ENCODE measurements at regions of chr3 and their contacts with region 1.

Region 1: GRCh38 chr3:16048435-16049318 is 125.8 kb upstream of the GALNT15 start:
- DNase-seq: peak in 6 of 10 donors; percentile 32 to 91 (median 58)

Region 2: DNA sequence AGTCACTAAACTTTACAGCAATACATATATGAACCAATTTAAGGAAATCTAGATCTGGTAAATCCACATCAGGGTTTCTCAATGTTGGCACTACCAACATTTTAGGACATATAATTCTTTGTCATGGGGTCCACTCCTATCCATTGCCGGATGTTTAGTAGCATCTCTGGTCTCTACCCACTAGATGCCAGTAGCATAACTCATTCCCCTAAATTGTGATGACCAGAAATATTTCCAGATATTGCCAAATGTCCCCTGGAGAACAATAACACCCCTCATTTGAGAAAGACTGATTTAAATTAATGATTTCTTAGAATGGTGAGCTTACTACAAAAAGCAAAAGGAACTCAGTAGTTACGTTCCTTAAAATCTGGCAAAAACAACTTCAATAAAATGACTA is 227.8 kb before region 1 on chr3:
- intact Hi-C with region 1: loop called (anchors 10 kb)
- DNase-seq: no peak

Region 3: DNA sequence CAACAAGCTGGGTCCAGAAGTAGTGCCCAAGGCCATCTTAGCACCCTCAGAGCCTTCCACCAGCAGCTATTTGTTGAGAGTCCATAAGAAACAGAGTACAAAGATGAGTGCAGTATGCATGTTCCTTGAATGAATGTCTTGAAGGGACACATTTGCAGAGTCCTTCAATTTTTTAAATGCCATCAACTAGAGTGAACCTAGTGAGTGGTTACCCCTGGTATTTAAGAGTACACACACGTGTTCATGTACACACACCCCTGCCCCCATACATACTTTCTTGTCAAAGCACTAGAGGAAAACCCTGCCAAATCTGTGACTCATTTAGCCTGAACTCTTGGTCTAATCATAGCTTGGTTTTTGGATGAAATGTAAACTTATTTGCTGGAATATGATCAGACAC is 41.3 kb after region 1 on chr3:
- intact Hi-C with region 1: no loop called
- DNase-seq: no peak

Region 4: DNA sequence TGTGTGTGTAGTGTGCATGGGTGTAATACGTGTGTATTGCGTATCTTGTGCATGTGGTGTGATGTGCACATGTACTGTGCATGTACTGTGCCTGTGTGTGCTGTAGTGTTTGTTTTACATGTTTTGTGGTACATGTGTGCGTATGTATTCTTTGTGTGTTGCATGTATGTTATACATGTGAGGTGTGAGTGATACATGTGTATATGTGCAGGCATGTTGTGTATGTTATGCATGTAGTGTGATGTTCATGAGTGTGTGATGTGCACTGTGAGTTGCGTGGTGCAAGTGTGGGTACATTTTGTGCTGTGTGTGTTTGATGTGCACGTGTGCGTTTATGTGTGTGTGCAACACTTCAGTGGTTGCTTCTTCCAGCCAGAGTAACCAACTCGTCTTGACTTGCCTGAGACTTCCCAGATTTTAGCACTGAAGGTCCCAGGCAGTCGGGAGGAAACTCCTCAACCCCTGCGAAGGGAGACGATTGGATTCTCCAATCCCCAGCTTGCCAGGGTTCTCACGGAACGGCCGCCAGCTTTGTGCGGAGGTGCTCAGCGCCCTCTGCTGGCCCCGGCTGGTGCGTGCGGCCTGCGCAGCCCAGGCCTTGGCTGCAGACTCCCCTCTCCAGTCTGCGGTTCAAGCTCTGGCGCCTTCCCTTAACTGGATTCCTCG is 129.4 kb after region 1 on chr3:
- intact Hi-C with region 1: loop called (anchors 1 kb)
- DNase-seq: peak; percentile 83 to 98 (median 88)

Region 5: DNA sequence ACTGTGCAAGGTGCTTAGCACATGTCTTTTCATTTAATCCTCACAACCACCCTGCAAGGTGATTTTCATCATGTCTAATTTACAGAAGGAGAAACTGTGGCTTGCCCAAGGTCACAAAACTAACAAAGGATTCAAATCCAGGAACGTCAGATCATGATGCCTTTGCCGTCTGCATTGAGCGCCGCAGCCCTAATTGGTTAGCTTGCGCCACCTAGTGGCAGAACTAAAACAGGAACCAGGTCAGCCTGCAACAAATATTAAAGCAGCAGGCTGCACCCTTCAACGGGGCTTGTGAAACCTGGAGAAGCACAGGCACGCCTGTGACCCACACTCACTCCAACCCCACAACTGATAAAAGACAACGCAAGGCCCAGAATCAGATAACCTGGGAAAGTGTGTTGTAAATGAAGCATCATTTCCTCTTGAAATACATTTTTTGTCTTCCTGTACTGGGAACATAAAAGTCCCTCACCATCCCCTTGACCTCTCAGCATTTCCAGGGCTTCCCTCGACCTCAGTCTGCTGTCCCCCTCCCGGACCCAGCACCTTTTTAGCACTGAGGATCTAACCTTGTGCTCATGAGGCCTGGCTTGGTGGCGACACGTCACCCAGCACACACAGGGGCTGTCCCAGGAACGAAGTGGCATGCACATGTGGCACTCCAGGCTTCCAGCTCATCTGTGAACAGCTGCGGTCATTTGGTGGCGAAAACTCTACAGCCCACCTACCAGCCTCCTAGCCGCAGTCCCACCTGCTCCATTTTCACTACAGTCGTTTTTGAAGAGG is 198.8 kb after region 1 on chr3:
- intact Hi-C with region 1: loop called (anchors 1 kb)
- DNase-seq: peak; percentile 54 to 97 (median 84)

Measured in posterior cingulate gyrus (tissue), 11 donors.